ENCODE measurements at regions of chr9 and their contacts with region 1.

Region 1: DNA sequence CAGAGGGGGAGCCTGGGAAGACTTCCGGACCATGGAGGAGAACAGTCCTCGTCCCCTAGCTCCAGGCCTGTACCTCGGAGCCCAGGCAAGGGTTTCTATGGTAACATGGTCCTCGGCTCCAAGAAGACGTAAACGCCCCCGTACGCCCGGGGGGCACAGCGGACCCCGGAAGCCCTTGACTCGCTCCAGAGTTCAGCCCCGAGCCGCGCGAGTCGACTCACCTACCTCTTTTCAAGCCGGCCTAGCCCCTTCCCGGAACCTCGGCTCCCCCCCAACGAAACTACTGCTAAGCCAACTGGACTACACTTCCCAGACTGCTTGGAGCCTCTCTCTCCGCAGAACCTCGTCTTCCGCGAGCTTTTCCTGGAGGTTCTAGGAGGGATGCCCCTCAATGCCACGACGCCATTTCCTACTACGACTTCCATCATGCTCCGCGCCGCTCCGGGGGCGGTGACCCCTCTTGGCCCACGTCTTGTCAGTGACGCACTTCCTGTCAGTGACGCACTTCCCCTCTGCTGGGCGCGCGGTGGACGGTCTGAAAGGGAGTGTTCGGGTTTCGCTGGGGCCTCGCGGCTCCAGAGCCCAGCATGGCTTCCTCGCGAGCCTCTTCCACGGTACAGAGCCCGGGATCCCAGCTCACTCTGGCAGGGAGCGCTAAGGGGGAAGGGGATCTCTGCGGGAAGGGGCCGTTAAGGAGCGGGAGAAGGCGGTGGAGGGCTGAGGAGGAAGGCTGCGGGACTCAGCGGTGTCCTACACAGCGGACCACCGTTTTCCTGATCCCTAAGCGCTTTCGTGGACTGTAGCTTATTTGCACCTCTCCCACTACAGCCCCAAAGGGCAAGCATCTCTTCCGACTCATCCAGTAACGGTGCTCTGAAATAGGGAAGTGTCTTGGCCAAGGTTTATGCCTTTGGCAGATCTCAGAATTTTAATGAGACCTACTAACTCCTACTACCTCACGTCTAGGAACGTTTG is at the starts of genes CDC26 and PRPF4:
- DNase-seq: peak; percentile 87
- ATAC-seq: peak; percentile 94
- H3K4me3 ChIP-seq: peak within 1 kb of the TSS; percentile 75
- H3K27ac ChIP-seq: peak within 1 kb of the TSS; percentile 89
- H3K4me1 ChIP-seq: peaks cover 8% of the 10 kb centered on the region; the same call in 1 of the 2 replicates
- H3K27me3 ChIP-seq: no peaks in the 10 kb centered on the region
- CTCF ChIP-seq: no peak
- EP300 ChIP-seq: no peak
- POLR2A ChIP-seq: peak; percentile 100
- RAD21 ChIP-seq: no peak
- polyA plus RNA-seq, gene CDC26: 140 to 156 TPM
- polyA plus RNA-seq, gene PRPF4: 23.0 to 43.5 TPM

Region 2: GRCh38 chr9:112921549-112921948 is 353.9 kb before region 1 on chr9:
- CTCF ChIA-PET with region 1: no interaction called
- POLR2A ChIA-PET with region 1: no interaction called
- RAD21 ChIA-PET with region 1: no interaction called
- SMC1A ChIA-PET with region 1: no interaction called
- in situ Hi-C with region 1: no loop called
- intact Hi-C with region 1: loop called (anchors 5 kb)
- DNase-seq: no peak
- ATAC-seq: peak; percentile 60
- H3K4me3 ChIP-seq: no peak overlapping the region
- H3K27ac ChIP-seq: no peak overlapping the region
- H3K4me1 ChIP-seq: no peaks in the 10 kb centered on the region
- H3K27me3 ChIP-seq: no peaks in the 10 kb centered on the region; a peak in 1 of 4 replicates
- CTCF ChIP-seq: peak; percentile 53 to 65 (median 62)
- EP300 ChIP-seq: no peak
- POLR2A ChIP-seq: no peak
- RAD21 ChIP-seq: peak; percentile 58

Region 3: GRCh38 chr9:113205432-113205831 is 70.0 kb before region 1 on chr9:
- CTCF ChIA-PET with region 1: no interaction called
- POLR2A ChIA-PET with region 1: no interaction called
- RAD21 ChIA-PET with region 1: no interaction called
- SMC1A ChIA-PET with region 1: no interaction called
- in situ Hi-C with region 1: no loop called
- intact Hi-C with region 1: no loop called
- DNase-seq: no peak
- ATAC-seq: no peak
- H3K4me3 ChIP-seq: no peak overlapping the region
- H3K27ac ChIP-seq: no peak overlapping the region
- H3K4me1 ChIP-seq: peaks cover 4% of the 10 kb centered on the region; the same call in 1 of the 2 replicates
- H3K27me3 ChIP-seq: no peaks in the 10 kb centered on the region
- CTCF ChIP-seq: no peak
- EP300 ChIP-seq: no peak
- POLR2A ChIP-seq: no peak
- RAD21 ChIP-seq: no peak

Region 4: DNA sequence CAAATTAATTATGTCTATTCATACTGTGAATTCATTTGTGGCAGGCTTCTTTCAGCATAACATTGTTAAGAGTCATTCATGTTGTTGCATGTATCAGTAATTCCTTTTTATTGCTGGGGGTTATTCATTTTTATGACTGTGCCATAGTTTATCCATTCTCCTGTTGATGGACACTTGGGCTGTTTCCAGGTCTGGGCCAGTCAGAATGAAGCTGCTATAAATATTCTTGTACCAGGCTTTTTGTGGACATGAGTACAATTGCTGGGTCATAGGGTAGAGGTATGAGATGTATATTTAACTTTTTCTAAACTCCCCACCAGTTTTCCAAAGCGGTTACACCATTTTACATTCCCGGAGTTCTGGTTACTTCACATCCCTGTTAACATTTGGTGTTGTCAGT is 13.6 kb after region 1 on chr9:
- CTCF ChIA-PET with region 1: interaction called, 12 read pairs
- POLR2A ChIA-PET with region 1: no interaction called
- RAD21 ChIA-PET with region 1: interaction called, 4 read pairs
- SMC1A ChIA-PET with region 1: no interaction called
- in situ Hi-C with region 1: no loop called
- intact Hi-C with region 1: no loop called
- DNase-seq: no peak
- ATAC-seq: no peak
- H3K4me3 ChIP-seq: no peak overlapping the region
- H3K27ac ChIP-seq: no peak overlapping the region
- H3K4me1 ChIP-seq: no peaks in the 10 kb centered on the region
- H3K27me3 ChIP-seq: no peaks in the 10 kb centered on the region
- CTCF ChIP-seq: no peak
- EP300 ChIP-seq: no peak
- POLR2A ChIP-seq: no peak
- RAD21 ChIP-seq: no peak

Region 5: GRCh38 chr9:113317777-113318176 is 42.3 kb after region 1 on chr9:
- CTCF ChIA-PET with region 1: no interaction called
- POLR2A ChIA-PET with region 1: no interaction called
- RAD21 ChIA-PET with region 1: no interaction called
- SMC1A ChIA-PET with region 1: no interaction called
- in situ Hi-C with region 1: no loop called
- intact Hi-C with region 1: no loop called
- DNase-seq: no peak
- ATAC-seq: no peak
- H3K4me3 ChIP-seq: no peak overlapping the region
- H3K27ac ChIP-seq: no peak overlapping the region
- H3K4me1 ChIP-seq: no peaks in the 10 kb centered on the region
- H3K27me3 ChIP-seq: peaks cover 0 to 3% of the 10 kb centered on the region in 2 experiments; a peak in 1 of 4 replicates
- CTCF ChIP-seq: no peak
- EP300 ChIP-seq: no peak
- POLR2A ChIP-seq: no peak
- RAD21 ChIP-seq: no peak

Region 6: GRCh38 chr9:113349445-113350094 is 74.1 kb after region 1 on chr9 and contains the start of gene BSPRY:
- CTCF ChIA-PET with region 1: interaction called, 10 read pairs
- POLR2A ChIA-PET with region 1: no interaction called
- RAD21 ChIA-PET with region 1: interaction called, 3 read pairs
- SMC1A ChIA-PET with region 1: no interaction called
- in situ Hi-C with region 1: no loop called
- intact Hi-C with region 1: loop called (anchors 5 kb)
- DNase-seq: no peak
- ATAC-seq: peak; percentile 52
- H3K4me3 ChIP-seq: peak within 1 kb of the TSS; percentile 66
- H3K27ac ChIP-seq: peak within 1 kb of the TSS; percentile 33; the same call in 1 of the 2 replicates
- H3K4me1 ChIP-seq: peaks cover 19% of the 10 kb centered on the region
- H3K27me3 ChIP-seq: no peaks in the 10 kb centered on the region; a peak in 2 of 4 replicates
- CTCF ChIP-seq: no peak
- EP300 ChIP-seq: no peak
- POLR2A ChIP-seq: no peak
- RAD21 ChIP-seq: no peak
- polyA plus RNA-seq, gene BSPRY: 1.00 to 1.5 TPM

Region 7: DNA sequence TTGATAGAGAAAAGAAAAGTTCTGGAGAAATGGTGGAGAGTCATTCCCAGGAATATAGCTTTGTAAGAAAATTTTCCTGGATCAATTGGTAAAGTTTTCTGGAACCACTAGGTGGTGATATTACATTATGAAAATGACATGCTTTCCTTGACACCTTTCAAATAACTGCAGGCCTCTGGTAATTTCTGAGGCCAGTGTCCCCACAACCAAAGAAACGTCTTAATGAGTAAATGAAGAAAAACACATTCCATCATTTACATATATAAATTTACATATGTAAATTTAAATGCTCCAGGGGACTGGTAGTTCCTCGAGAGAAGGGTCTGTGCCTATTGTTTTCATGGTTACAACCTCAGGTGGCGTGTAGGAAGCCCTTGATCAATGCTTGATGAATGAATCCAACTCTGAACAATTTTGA is 170.9 kb after region 1 on chr9:
- CTCF ChIA-PET with region 1: interaction called, 31 read pairs
- POLR2A ChIA-PET with region 1: interaction called, 5 read pairs
- RAD21 ChIA-PET with region 1: interaction called, 6 read pairs
- SMC1A ChIA-PET with region 1: interaction called, 12 read pairs
- in situ Hi-C with region 1: no loop called
- intact Hi-C with region 1: no loop called
- DNase-seq: peak; percentile 25
- ATAC-seq: peak; percentile 80
- H3K4me3 ChIP-seq: no peak overlapping the region
- H3K27ac ChIP-seq: no peak overlapping the region
- H3K4me1 ChIP-seq: no peaks in the 10 kb centered on the region
- H3K27me3 ChIP-seq: no peaks in the 10 kb centered on the region
- CTCF ChIP-seq: peak; percentile 42 to 69 (median 50); a peak in 5 of 6 replicates
- EP300 ChIP-seq: no peak
- POLR2A ChIP-seq: no peak
- RAD21 ChIP-seq: peak; percentile 81

Region 8: GRCh38 chr9:113591001-113591898 is 315.8 kb after region 1 on chr9:
- CTCF ChIA-PET with region 1: interaction called, 16 read pairs
- POLR2A ChIA-PET with region 1: interaction called, 3 read pairs
- RAD21 ChIA-PET with region 1: interaction called, 9 read pairs
- SMC1A ChIA-PET with region 1: interaction called, 3 read pairs
- in situ Hi-C with region 1: no loop called
- intact Hi-C with region 1: no loop called
- DNase-seq: no peak
- ATAC-seq: peak; percentile 72
- H3K4me3 ChIP-seq: no peak overlapping the region
- H3K27ac ChIP-seq: no peak overlapping the region
- H3K4me1 ChIP-seq: peaks cover 29% of the 10 kb centered on the region
- H3K27me3 ChIP-seq: no peaks in the 10 kb centered on the region
- CTCF ChIP-seq: peak; percentile 87 to 93 (median 92)
- EP300 ChIP-seq: no peak
- POLR2A ChIP-seq: no peak
- RAD21 ChIP-seq: peak; percentile 85